Adrenal gland (tissue), 19 donors: ENCODE measurements at regions of chr1 and their contacts with region 1.

Region 1: DNA sequence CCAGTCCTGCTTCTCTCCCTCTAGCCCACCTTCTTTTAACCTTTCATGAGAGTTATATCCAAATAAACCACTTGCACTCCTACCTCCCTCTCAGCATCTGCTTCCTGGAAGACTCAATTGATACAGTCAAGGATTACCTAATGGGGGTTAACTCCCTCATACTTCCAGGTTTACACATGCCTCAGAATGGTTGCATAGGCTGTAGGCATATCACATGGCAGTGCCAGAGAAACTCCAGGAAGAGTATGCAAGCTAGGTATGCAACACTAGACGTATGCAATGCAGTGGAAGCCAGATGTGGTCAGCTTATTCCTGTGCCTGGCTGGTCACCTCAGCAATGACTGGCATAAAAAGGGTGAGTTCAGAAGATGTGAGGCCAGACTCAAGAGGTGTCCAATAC is 32.7 kb upstream of the VANGL1 start:
- DNase-seq: no peak
- H3K4me3 ChIP-seq: no peak overlapping the region
- H3K27ac ChIP-seq: no peak overlapping the region
- H3K4me1 ChIP-seq: no peaks in the 10 kb centered on the region
- H3K27me3 ChIP-seq: no peaks in the 10 kb centered on the region
- CTCF ChIP-seq: no peak
- POLR2A ChIP-seq: no peak

Region 2: GRCh38 chr1:115706587-115707425 is 97.8 kb after region 1 on chr1:
- intact Hi-C with region 1: loop called (anchors 5 to 10 kb)
- DNase-seq: peak in 2 of 7 donors; percentile 28 to 34
- H3K4me3 ChIP-seq: no peak overlapping the region
- H3K27ac ChIP-seq: no peak overlapping the region
- H3K4me1 ChIP-seq: no peaks in the 10 kb centered on the region
- H3K27me3 ChIP-seq: peaks cover 3% of the 10 kb centered on the region
- CTCF ChIP-seq: peak; percentile 31 to 73 (median 60)
- POLR2A ChIP-seq: no peak

Region 3: GRCh38 chr1:115771847-115772457 is 162.9 kb after region 1 on chr1:
- intact Hi-C with region 1: loop called in 1 of 2 experiments (anchors 2 kb)
- DNase-seq: peak; percentile 56 to 82 (median 67)
- H3K4me3 ChIP-seq: no peak overlapping the region
- H3K27ac ChIP-seq: no peak overlapping the region
- H3K4me1 ChIP-seq: peaks cover 0 to 3% of the 10 kb centered on the region in 2 donors
- H3K27me3 ChIP-seq: no peaks in the 10 kb centered on the region
- CTCF ChIP-seq: peak; percentile 55 to 84 (median 77)
- POLR2A ChIP-seq: no peak